Activated CD8-positive, alpha-beta memory T cell treated with anti-CD3 and anti-CD28 coated beads, Interleukin-2, amount 10 ng/mL, durations not matched to agents 7 days and 5 days (primary cell): ENCODE measurements at regions of chr3 and their contacts with region 1.

Region 1: DNA sequence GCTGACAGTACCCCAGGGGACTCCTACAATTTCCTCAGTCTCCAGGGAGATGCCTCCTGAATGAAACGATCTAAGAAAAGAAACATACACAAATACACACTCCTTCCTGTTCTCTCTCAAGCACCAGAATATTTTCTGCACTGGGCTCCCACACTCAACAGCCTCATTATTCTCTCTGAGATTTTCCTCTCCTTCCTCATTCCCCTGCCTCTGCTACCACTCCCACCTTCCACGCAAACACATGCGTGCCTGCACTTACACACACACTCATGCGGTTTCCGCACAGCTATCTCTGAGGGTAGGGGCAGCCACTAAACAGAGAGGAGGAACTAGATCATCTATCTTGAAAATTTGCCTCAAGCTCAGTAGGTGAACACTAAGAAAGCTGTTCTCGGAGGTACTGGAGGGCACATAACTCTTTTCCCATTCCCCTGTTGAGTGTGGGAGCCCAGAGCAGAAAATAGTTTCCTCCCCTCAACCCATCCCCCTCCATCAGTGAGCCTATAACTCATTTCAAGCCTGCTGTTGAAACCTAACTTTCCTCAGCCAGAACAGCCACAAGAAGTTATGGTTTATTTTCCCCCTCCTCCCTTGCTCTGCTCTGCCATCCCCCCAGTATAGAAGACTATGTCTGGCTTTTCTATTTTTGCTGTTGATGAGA is 30.5 kb upstream of the TIPARP start:
- DNase-seq: peak; percentile 78
- ATAC-seq: peak; percentile 89
- H3K4me3 Mint-ChIP-seq: peak overlapping the region; percentile 48
- H3K27ac Mint-ChIP-seq: peak overlapping the region; percentile 83
- H3K4me1 Mint-ChIP-seq: peaks cover 32% of the 10 kb centered on the region
- H3K27me3 Mint-ChIP-seq: no peaks in the 10 kb centered on the region

Region 2: DNA sequence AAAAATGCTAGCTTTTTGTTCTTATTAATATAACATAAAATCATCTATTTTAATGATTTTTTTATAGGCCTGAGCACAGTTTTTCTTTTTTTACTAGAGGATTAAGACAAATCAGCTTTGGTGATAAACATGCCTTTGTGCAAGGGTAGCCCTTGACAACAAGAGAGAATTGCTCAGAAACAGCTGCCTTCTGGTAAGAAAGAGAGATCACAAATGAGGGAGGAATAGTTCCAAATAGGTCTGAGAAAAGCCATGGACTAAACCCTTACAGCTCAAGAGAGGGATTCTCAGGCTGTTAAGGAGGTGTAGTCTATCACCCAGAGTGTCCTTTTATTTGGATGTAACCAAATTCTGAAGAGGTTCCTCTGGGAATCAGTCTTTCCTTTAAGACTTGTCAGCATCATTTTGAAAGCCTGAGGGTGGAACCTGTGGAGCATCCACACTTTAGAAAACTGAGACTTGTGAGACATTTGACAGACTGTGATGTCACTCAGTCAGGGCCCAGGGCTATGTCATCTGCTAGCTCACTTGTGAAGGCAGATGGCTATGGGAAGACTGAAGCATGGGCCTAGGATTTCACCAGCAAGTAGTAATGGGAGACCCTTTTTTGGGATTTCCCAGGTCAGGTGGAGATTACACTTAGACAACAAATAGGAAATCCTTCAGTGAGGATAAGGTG is 626.4 kb before region 1 on chr3:
- CTCF ChIA-PET with region 1: no interaction called
- DNase-seq: no peak
- ATAC-seq: no peak
- H3K4me3 Mint-ChIP-seq: no peak overlapping the region
- H3K27ac Mint-ChIP-seq: no peak overlapping the region
- H3K4me1 Mint-ChIP-seq: no peaks in the 10 kb centered on the region
- H3K27me3 Mint-ChIP-seq: peaks cover 3% of the 10 kb centered on the region

Region 3: GRCh38 chr3:156664831-156665178 is 20.9 kb after region 1 on chr3:
- CTCF ChIA-PET with region 1: interaction called, 11 read pairs
- DNase-seq: no peak
- ATAC-seq: peak; percentile 68
- H3K4me3 Mint-ChIP-seq: peak overlapping the region; percentile 49
- H3K27ac Mint-ChIP-seq: peak overlapping the region; percentile 93
- H3K4me1 Mint-ChIP-seq: peaks cover 66% of the 10 kb centered on the region
- H3K27me3 Mint-ChIP-seq: no peaks in the 10 kb centered on the region